Activated T-helper 2 cell treated with anti-CD3 and anti-CD28 coated beads, Interferon-gamma antibody, Interleukin-2, Interleukin-4, amounts not matched to agents 10 μg/mL and 5 μg/mL and 100 μg/mL, durations not matched to agents 14 hours and 24 hours and 36 hours (primary cell): ENCODE measurements at regions of chr12 and their contacts with region 1.

Region 1: DNA sequence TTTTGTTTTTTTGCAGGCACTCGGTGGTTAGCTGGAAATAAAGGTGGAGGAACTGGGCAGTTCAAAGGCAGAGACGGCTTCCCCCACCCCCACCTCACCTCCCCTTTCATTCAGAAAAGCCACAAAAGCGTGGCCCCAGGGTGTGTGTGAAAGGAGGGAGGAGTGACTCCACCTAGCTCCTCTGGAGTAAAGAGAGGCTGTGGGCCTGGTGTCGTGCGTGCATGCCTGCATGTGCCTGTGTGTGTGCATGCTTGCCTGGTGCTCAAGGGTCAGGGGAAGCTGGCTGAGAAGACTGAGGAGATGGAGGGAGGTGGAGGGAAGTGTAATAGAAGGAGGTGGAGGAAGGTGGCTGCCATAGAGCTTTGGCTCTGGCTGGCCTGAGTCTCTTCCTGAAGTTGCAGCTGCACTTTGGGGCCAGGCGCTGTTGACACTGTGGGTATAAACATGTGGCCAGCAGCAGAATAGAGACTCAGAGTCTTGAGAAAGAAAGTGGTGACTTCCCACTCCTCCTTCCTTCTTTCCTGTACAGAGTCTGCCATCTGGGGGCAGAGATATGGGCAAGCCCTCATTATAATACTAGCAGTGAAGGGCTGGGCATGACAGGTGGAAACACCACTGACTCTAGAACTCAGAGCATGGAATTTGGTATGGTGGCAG is 36.9 kb upstream of the SINHCAF start:
- DNase-seq: peak; percentile 32
- H3K4me3 Mint-ChIP-seq: peak overlapping the region; percentile 49
- H3K27ac Mint-ChIP-seq: peak overlapping the region; percentile 78
- H3K4me1 Mint-ChIP-seq: peaks cover 19% of the 10 kb centered on the region
- H3K27me3 Mint-ChIP-seq: no peaks in the 10 kb centered on the region

Region 2: GRCh38 chr12:30613119-30613830 is 749.6 kb before region 1 on chr12:
- intact Hi-C with region 1: no loop called
- DNase-seq: no peak
- H3K4me3 Mint-ChIP-seq: no peak overlapping the region
- H3K27ac Mint-ChIP-seq: no peak overlapping the region
- H3K4me1 Mint-ChIP-seq: no peaks in the 10 kb centered on the region
- H3K27me3 Mint-ChIP-seq: no peaks in the 10 kb centered on the region

Region 3: GRCh38 chr12:31250179-31250578 is 112.7 kb before region 1 on chr12:
- intact Hi-C with region 1: loop called (anchors 2 kb)
- DNase-seq: no peak
- H3K4me3 Mint-ChIP-seq: no peak overlapping the region
- H3K27ac Mint-ChIP-seq: no peak overlapping the region
- H3K4me1 Mint-ChIP-seq: no peaks in the 10 kb centered on the region
- H3K27me3 Mint-ChIP-seq: peaks cover 5% of the 10 kb centered on the region

Region 4: GRCh38 chr12:31339831-31340622 is 22.9 kb before region 1 on chr12:
- intact Hi-C with region 1: no loop called
- DNase-seq: no peak
- H3K4me3 Mint-ChIP-seq: no peak overlapping the region
- H3K27ac Mint-ChIP-seq: no peak overlapping the region
- H3K4me1 Mint-ChIP-seq: peaks cover 2% of the 10 kb centered on the region
- H3K27me3 Mint-ChIP-seq: peaks cover 5% of the 10 kb centered on the region